Left ventricle myocardium inferior (tissue), 1 donor: ENCODE measurements at regions of chrX and their contacts with region 1.

Region 1: GRCh38 chrX:54386314-54386713 is 28.5 kb upstream of the WNK3 start:
- DNase-seq: no peak
- H3K4me3 ChIP-seq: no peak overlapping the region
- H3K27ac ChIP-seq: no peak overlapping the region
- H3K4me1 ChIP-seq: no peaks in the 10 kb centered on the region
- H3K27me3 ChIP-seq: no peaks in the 10 kb centered on the region
- CTCF ChIP-seq: no peak

Region 2: GRCh38 chrX:54423161-54423888 is 37.0 kb after region 1 on chrX:
- intact Hi-C with region 1: no loop called
- DNase-seq: no peak
- H3K4me3 ChIP-seq: no peak overlapping the region
- H3K27ac ChIP-seq: no peak overlapping the region
- H3K4me1 ChIP-seq: peaks cover 11% of the 10 kb centered on the region
- H3K27me3 ChIP-seq: no peaks in the 10 kb centered on the region
- CTCF ChIP-seq: peak; percentile 9

Region 3: GRCh38 chrX:56219700-56220099 is 1833.4 kb after region 1 on chrX:
- intact Hi-C with region 1: loop called (anchors 10 kb)
- DNase-seq: no peak
- H3K4me3 ChIP-seq: no peak overlapping the region
- H3K27ac ChIP-seq: peak overlapping the region; percentile 27
- H3K4me1 ChIP-seq: no peaks in the 10 kb centered on the region
- H3K27me3 ChIP-seq: no peaks in the 10 kb centered on the region
- CTCF ChIP-seq: peak; percentile 38